Stomach (tissue), 19 donors: ENCODE measurements at regions of chr3 and their contacts with region 1.

Region 1: GRCh38 chr3:94379264-94379663 is 316.4 kb downstream of the NSUN3 start:
- DNase-seq: no peak
- H3K4me3 ChIP-seq: no peak overlapping the region
- H3K27ac ChIP-seq: no peak overlapping the region
- H3K4me1 ChIP-seq: no peaks in the 10 kb centered on the region
- H3K27me3 ChIP-seq: no peaks in the 10 kb centered on the region
- CTCF ChIP-seq: no peak
- EP300 ChIP-seq: no peak
- POLR2A ChIP-seq: no peak

Region 2: GRCh38 chr3:94665922-94666321 is 286.7 kb after region 1 on chr3:
- intact Hi-C with region 1: no loop called
- DNase-seq: no peak
- H3K4me3 ChIP-seq: no peak overlapping the region
- H3K27ac ChIP-seq: no peak overlapping the region
- H3K4me1 ChIP-seq: no peaks in the 10 kb centered on the region
- H3K27me3 ChIP-seq: no peaks in the 10 kb centered on the region
- CTCF ChIP-seq: no peak
- EP300 ChIP-seq: no peak
- POLR2A ChIP-seq: no peak

Region 3: GRCh38 chr3:95521395-95521794 is 1142.1 kb after region 1 on chr3:
- intact Hi-C with region 1: loop called (anchors 5 kb)
- DNase-seq: no peak
- H3K4me3 ChIP-seq: no peak overlapping the region
- H3K27ac ChIP-seq: no peak overlapping the region
- H3K4me1 ChIP-seq: no peaks in the 10 kb centered on the region
- H3K27me3 ChIP-seq: no peaks in the 10 kb centered on the region
- CTCF ChIP-seq: no peak
- EP300 ChIP-seq: no peak
- POLR2A ChIP-seq: no peak